ENCODE measurements at regions of chr4 and their contacts with region 1.

Region 1: DNA sequence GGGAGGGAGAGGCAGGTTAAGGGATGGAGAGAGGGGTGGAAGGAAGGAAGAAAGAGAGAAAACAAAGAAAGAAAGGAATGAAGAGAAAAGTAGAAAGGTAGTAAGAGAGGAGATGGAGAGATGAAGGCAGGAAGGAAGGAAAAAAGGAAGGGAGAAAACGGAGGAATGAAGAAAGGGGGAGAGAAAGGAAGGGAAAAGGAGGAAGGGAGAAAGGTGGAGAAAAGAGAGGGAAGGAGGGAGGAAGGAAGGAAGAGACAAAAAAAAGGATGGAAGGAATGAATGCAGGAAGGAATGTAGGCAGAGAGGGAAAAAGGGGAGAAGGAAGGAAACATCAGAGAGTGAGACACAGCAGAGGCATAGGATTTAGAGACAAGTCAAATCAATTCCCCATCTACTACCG is 68.2 kb downstream of the DKK2 start:
- DNase-seq: no peak
- H3K4me3 ChIP-seq: no peak overlapping the region
- H3K27ac ChIP-seq: no peak overlapping the region
- H3K4me1 ChIP-seq: no peaks in the 10 kb centered on the region
- H3K27me3 ChIP-seq: no peaks in the 10 kb centered on the region
- CTCF ChIP-seq: no peak
- EP300 ChIP-seq: no peak
- POLR2A ChIP-seq: no peak

Region 2: GRCh38 chr4:106898621-106899230 is 69.2 kb before region 1 on chr4:
- in situ Hi-C with region 1: no loop called
- intact Hi-C with region 1: loop called (anchors 2 kb)
- DNase-seq: peak; percentile 12
- H3K4me3 ChIP-seq: no peak overlapping the region
- H3K27ac ChIP-seq: no peak overlapping the region
- H3K4me1 ChIP-seq: no peaks in the 10 kb centered on the region
- H3K27me3 ChIP-seq: no peaks in the 10 kb centered on the region
- CTCF ChIP-seq: peak; percentile 25 to 51 (median 49)
- EP300 ChIP-seq: no peak
- POLR2A ChIP-seq: no peak

Measured in transverse colon (tissue), 4 donors.